ENCODE measurements at regions of chr19 and their contacts with region 1.

Region 1: GRCh38 chr19:17469481-17470067 is 750 bp upstream of the SLC27A1 start:
- H3K4me3 Mint-ChIP-seq: peak overlapping the region; percentile 88
- H3K27ac Mint-ChIP-seq: peak overlapping the region; percentile 92
- H3K4me1 Mint-ChIP-seq: peaks cover 71% of the 10 kb centered on the region
- H3K27me3 Mint-ChIP-seq: peaks cover 6% of the 10 kb centered on the region

Region 2: DNA sequence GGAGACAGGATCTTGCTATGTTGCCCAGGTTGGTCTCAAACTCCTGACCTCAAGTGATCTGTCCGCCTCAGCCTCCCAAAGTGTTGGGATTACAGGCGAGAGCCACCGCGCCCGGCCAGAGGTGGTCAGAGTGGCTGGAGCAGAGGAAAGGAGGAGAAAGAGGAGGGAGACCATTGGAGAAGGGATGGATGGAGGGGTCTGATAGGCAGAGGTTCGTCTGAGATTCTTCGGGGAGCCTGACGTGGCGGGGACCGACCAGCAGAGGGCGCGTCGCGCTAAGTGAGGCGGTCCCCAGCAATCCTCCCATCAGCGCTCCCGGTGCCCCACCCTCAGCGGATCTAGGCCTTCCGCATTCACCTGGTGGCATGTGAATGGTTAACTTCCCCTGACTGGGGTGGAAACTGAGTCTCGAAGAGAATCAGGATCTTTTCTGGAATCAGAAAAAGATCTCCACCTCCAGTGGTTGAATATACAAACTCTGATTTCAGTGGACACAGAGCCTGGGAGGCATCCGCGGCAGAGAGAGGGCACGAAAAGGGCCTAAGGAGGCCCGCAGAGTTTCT is 123.4 kb before region 1 on chr19:
- intact Hi-C with region 1: loop called (anchors 5 kb)
- H3K4me3 Mint-ChIP-seq: no peak overlapping the region
- H3K27ac Mint-ChIP-seq: no peak overlapping the region
- H3K4me1 Mint-ChIP-seq: peaks cover 27% of the 10 kb centered on the region
- H3K27me3 Mint-ChIP-seq: peaks cover 39% of the 10 kb centered on the region

Region 3: DNA sequence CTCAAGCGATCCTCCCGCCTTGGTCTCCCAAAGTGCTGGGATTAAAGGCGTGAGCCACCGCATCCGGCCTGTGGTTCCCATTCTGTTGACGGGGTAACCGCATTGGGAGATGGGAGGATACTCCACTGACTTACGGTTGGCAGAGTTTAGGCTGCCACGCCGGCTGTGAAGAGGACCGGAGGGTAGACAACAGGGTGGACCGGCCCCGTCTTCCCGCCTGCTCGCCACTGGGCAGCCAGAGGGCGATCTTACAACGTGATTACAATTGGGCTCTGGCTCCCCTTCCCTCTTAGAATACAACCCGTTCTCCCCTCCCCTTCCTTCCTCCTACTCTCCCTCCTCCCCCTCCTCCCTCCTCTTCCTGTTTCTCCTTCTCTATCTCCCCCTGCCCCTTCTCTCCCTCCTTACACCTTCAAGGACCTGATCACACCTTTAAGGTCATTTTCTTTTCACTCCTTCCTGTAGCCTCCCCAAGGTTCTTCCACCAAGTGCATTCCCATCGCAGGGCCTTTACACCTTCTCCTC is 74.6 kb before region 1 on chr19:
- intact Hi-C with region 1: loop called (anchors 1 kb)
- H3K4me3 Mint-ChIP-seq: no peak overlapping the region
- H3K27ac Mint-ChIP-seq: no peak overlapping the region
- H3K4me1 Mint-ChIP-seq: peaks cover 27% of the 10 kb centered on the region
- H3K27me3 Mint-ChIP-seq: peaks cover 8% of the 10 kb centered on the region

Region 4: DNA sequence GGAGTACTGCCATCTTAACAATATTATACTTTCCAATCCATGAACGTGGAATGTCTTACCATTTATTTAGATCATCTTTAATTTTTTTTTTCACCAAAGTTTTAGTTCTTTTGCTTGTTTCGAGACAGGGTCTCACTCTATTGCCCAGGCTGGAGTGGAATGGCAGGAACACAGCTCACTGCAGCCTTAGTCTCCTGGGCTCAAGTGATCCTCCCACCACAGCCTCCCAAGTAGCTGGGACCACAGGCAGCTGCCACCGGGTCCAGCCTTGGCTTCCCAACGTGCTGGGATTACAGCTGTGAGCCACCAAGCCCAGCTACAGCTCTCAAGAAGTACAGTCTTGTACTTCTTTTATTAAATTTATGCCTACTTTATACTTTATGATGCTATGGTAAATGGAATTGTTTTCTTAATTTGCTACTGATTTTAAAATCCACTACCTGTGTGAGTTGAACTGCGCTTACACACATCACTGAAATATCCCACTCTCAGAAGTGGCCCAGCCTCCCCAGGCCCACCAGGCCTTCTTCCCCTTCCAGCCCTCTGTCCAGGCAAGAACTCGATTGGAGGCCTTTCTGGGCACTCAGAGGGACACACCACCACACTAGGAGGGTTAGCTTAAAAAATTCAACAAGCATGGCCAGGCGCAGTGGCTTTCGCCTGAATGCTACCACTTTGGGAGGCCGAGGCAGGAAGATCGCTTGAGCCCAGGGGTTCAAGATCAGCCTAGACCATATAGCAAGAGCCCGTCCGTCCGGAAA is 40.8 kb after region 1 on chr19:
- intact Hi-C with region 1: no loop called
- H3K4me3 Mint-ChIP-seq: peak overlapping the region; percentile 94
- H3K27ac Mint-ChIP-seq: peak overlapping the region; percentile 92
- H3K4me1 Mint-ChIP-seq: peaks cover 64% of the 10 kb centered on the region
- H3K27me3 Mint-ChIP-seq: no peaks in the 10 kb centered on the region

Measured in dendritic cell treated with granulocyte-macrophage colony-stimulating factor and Interleukin-4, amounts not matched to agents 40 ng/mL and 50 ng/mL, for 4 days (primary cell).